A549 (cell line): ENCODE measurements at regions of chr11 and their contacts with region 1.

Region 1: GRCh38 chr11:7657306-7658025 is 15.8 kb downstream of the CYB5R2 start:
- DNase-seq: peak; percentile 49 to 77
- ATAC-seq: peak; percentile 90 to 96
- H3K4me3 ChIP-seq: no peak overlapping the region
- H3K27ac ChIP-seq: peak overlapping the region in 1 of 2 experiments; percentile 74; a peak in 3 of 6 replicates
- H3K4me1 ChIP-seq: peaks cover 5% of the 10 kb centered on the region; the same call in 2 of the 3 replicates
- CTCF ChIP-seq: peak; percentile 81
- EP300 ChIP-seq: no peak
- POLR2A ChIP-seq: no peak
- RAD21 ChIP-seq: peak; percentile 93 to 95

Region 2: GRCh38 chr11:7353100-7353499 is 304.4 kb before region 1 on chr11:
- CTCF ChIA-PET with region 1: interaction called, 13 read pairs
- POLR2A ChIA-PET with region 1: no interaction called
- DNase-seq: peak; percentile 29 to 43
- ATAC-seq: peak; percentile 74 to 89; a peak in 4 of 6 replicates
- H3K4me3 ChIP-seq: no peak overlapping the region
- H3K27ac ChIP-seq: no peak overlapping the region
- H3K4me1 ChIP-seq: no peaks in the 10 kb centered on the region
- CTCF ChIP-seq: peak; percentile 53
- EP300 ChIP-seq: no peak
- POLR2A ChIP-seq: no peak
- RAD21 ChIP-seq: peak; percentile 55 to 59

Region 3: DNA sequence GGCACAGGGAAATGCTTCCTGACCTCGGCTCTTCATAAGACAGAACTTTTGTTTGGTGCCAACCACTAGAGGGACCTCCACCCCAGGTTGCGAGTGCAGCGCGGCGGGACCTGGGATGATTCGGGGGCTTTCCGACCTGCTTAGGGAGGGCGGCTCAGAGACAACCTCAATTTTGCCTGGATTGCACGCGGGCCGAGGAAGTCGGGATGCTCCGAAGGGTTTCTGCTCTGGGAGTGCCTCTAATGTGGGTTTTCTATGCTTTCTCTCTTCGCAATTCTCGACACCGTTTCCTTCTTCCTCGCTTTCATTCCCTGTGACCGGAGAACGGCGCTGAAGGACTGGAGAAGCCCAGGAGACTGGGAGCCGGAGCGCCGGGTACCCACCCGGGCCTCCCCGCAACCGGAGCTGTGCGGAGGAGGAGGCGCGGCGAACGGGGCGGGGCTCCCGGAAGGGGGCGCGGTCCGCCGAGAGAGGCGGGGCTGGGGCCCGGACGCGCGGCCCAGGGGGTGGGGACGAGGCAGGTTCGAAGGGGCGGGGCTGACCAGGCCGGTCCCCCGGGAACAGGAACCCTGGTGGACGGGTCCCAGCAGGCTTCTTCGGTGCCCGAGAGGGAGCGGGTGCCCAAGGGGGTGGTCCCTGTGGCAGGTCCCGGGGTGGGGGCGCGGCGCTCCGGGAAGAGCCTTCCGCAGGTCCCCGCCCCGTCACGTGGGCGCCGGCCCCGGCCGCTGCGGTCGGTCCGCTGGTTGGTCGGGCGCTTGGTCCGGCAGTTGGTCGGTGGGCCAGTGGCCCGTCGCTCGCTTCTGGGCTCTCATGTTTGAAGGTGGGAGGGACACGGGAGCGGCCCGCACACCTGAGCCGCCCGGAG is 144.0 kb before region 1 on chr11 and contains the start of gene PPFIBP2:
- CTCF ChIA-PET with region 1: interaction called, 24 read pairs
- POLR2A ChIA-PET with region 1: no interaction called
- DNase-seq: peak; percentile 73 to 90
- ATAC-seq: peak; percentile 92 to 96
- H3K4me3 ChIP-seq: peak within 1 kb of the TSS; percentile 76
- H3K27ac ChIP-seq: peak within 1 kb of the TSS; percentile 75 to 92
- H3K4me1 ChIP-seq: 0 out of 3 replicates have a peak, but pooled peaks cover 6% of the 10 kb centered on the region
- CTCF ChIP-seq: peak; percentile 90
- EP300 ChIP-seq: no peak
- POLR2A ChIP-seq: no peak
- RAD21 ChIP-seq: peak; percentile 71 to 79
- polyA plus RNA-seq, gene PPFIBP2: 32.5 and 58.4 TPM in 2 replicates

Region 4: GRCh38 chr11:7548659-7549274 is 108.7 kb before region 1 on chr11:
- CTCF ChIA-PET with region 1: interaction called, 13 read pairs
- POLR2A ChIA-PET with region 1: no interaction called
- DNase-seq: peak in 1 of 2 experiments; percentile 27
- ATAC-seq: peak; percentile 67 to 92; a peak in 5 of 6 replicates
- H3K4me3 ChIP-seq: no peak overlapping the region
- H3K27ac ChIP-seq: no peak overlapping the region
- H3K4me1 ChIP-seq: peaks cover 10% of the 10 kb centered on the region; the same call in 1 of the 3 replicates
- CTCF ChIP-seq: peak; percentile 22; the same call in 1 of the 3 replicates
- EP300 ChIP-seq: no peak
- POLR2A ChIP-seq: no peak
- RAD21 ChIP-seq: peak in 1 of 2 experiments; percentile 25; a peak in 2 of 5 replicates

Region 5: GRCh38 chr11:7559398-7560283 is 97.8 kb before region 1 on chr11:
- CTCF ChIA-PET with region 1: interaction called, 14 read pairs
- POLR2A ChIA-PET with region 1: no interaction called
- DNase-seq: no peak
- ATAC-seq: no peak
- H3K4me3 ChIP-seq: no peak overlapping the region
- H3K27ac ChIP-seq: no peak overlapping the region
- H3K4me1 ChIP-seq: no peaks in the 10 kb centered on the region
- CTCF ChIP-seq: no peak
- EP300 ChIP-seq: no peak
- POLR2A ChIP-seq: no peak
- RAD21 ChIP-seq: no peak

Region 6: GRCh38 chr11:7564803-7565202 is 92.7 kb before region 1 on chr11:
- CTCF ChIA-PET with region 1: interaction called, 290 read pairs
- POLR2A ChIA-PET with region 1: no interaction called
- DNase-seq: no peak
- ATAC-seq: no peak
- H3K4me3 ChIP-seq: no peak overlapping the region
- H3K27ac ChIP-seq: no peak overlapping the region
- H3K4me1 ChIP-seq: no peaks in the 10 kb centered on the region
- CTCF ChIP-seq: no peak
- EP300 ChIP-seq: no peak
- POLR2A ChIP-seq: no peak
- RAD21 ChIP-seq: no peak

Region 7: DNA sequence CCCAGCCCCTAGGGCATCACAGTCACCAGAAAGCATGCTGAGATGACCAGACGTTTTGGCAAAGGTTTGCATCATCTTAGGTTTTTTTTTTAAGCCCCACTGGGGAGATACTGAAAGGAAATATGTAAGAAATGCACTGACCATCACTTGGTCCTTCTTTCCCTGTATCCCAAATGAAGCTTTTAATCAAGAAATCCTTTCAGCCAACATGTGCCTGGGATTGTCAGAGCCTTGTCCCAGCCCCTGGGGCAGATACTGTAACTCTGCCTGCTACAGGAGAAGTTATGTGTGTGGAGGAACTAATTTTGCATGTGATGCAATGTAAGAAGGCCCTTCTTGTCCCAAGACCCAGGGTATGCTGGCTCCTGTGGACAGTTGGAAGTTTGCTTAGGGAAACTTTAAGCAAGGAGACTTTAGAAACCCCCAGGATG is 78.1 kb before region 1 on chr11:
- CTCF ChIA-PET with region 1: interaction called, 290 read pairs
- POLR2A ChIA-PET with region 1: no interaction called
- DNase-seq: no peak
- ATAC-seq: no peak
- H3K4me3 ChIP-seq: no peak overlapping the region
- H3K27ac ChIP-seq: peak overlapping the region; percentile 17 to 88
- H3K4me1 ChIP-seq: peaks cover 66% of the 10 kb centered on the region
- CTCF ChIP-seq: no peak
- EP300 ChIP-seq: no peak
- POLR2A ChIP-seq: no peak
- RAD21 ChIP-seq: no peak